H1 (cell line): ENCODE measurements at regions of chr2 and their contacts with region 1.

Region 1: DNA sequence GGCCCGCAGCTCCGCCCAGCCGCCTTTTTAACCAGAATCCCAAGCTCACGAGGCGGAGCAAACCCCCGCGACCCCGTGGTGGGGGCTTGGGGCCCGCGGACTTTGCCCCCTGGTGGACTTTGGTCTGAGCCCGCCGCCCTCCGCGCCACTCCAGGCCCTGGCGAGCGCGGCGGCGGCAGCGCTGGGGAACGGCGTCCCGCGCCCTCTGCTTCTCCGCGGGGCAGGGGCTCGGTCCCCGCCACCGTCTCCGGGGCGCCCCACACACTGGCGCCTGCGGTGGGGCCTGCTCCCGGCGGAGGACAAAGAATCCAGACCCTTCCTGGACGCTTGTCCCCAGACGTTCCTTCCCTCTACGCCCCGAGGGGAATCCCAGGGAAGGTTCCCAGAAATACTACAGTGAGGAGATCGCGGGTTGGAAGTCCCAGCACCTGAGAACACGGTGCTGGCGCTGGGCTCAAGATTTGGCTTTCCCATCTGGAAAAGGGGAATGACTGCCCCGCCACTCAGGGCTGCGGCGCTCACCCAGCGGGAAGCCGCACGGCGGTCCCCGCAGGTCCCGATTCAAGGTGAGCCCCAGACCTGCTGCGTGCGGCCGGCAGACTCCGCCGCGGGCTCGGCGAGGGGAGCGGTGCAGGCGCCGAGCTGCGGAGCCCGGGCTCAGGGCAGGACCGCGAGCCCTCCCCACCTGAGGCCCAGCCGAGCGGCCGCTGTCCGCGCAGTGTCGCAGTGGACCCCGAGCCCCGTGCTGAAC is at the start of gene HAAO:
- DNase-seq: peak in 1 of 2 experiments; percentile 77
- H3K4me3 ChIP-seq: peak within 1 kb of the TSS; percentile 61 to 75 (median 69)
- H3K27ac ChIP-seq: no peak within 1 kb of the TSS
- H3K4me1 ChIP-seq: peaks cover 2 to 10% (median 5%) of the 10 kb centered on the region in 4 experiments; a peak in 6 of 7 replicates
- H3K27me3 ChIP-seq: peaks cover 0 to 18% (median 14%) of the 10 kb centered on the region in 4 experiments; a peak in 6 of 7 replicates
- CTCF ChIP-seq: peak; percentile 1 to 17 (median 6); a peak in 3 of 4 replicates
- EP300 ChIP-seq: no peak
- POLR2A ChIP-seq: no peak; a peak in 1 of 3 replicates
- RAD21 ChIP-seq: no peak; a peak in 1 of 4 replicates
- total RNA-seq, gene HAAO: 2.5 and 3.2 TPM in 2 replicates

Region 2: DNA sequence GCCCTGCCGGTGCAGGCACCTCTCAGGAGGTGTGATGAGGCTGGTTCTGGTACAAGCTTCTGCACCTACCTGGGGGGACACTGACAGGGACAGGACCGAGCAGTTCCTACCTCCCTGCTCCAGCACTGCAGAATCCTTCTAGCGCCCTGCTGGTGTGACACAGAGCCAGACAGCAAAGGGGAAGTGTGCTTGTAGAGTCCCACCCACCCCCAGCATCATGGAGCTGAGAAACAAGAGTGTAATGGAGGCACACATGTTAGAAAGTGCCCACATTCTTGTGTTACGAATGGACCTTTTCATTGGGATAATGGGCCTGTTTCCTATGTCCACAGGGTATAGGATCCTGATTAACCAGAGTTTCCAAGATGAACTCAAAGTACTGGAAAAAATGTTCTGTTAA is 67.1 kb before region 1 on chr2:
- CTCF ChIA-PET with region 1: no interaction called
- POLR2A ChIA-PET with region 1: no interaction called
- DNase-seq: no peak
- H3K4me3 ChIP-seq: no peak overlapping the region
- H3K27ac ChIP-seq: no peak overlapping the region
- H3K4me1 ChIP-seq: peaks cover 0 to 10% (median 0%) of the 10 kb centered on the region in 4 experiments; a peak in 2 of 7 replicates
- H3K27me3 ChIP-seq: no peaks in the 10 kb centered on the region
- CTCF ChIP-seq: no peak
- EP300 ChIP-seq: no peak
- POLR2A ChIP-seq: no peak
- RAD21 ChIP-seq: no peak

Region 3: GRCh38 chr2:42810121-42810970 is 17.6 kb after region 1 on chr2:
- CTCF ChIA-PET with region 1: interaction called, 10 read pairs
- POLR2A ChIA-PET with region 1: interaction called, 61 read pairs
- DNase-seq: peak; percentile 87 to 96
- H3K4me3 ChIP-seq: peak overlapping the region; percentile 55 to 80 (median 66)
- H3K27ac ChIP-seq: peak overlapping the region; percentile 85
- H3K4me1 ChIP-seq: peaks cover 0 to 3% (median 0%) of the 10 kb centered on the region in 4 experiments; a peak in 4 of 7 replicates
- H3K27me3 ChIP-seq: no peaks in the 10 kb centered on the region
- CTCF ChIP-seq: no peak
- EP300 ChIP-seq: no peak
- POLR2A ChIP-seq: peak; percentile 83
- RAD21 ChIP-seq: no peak

Region 4: DNA sequence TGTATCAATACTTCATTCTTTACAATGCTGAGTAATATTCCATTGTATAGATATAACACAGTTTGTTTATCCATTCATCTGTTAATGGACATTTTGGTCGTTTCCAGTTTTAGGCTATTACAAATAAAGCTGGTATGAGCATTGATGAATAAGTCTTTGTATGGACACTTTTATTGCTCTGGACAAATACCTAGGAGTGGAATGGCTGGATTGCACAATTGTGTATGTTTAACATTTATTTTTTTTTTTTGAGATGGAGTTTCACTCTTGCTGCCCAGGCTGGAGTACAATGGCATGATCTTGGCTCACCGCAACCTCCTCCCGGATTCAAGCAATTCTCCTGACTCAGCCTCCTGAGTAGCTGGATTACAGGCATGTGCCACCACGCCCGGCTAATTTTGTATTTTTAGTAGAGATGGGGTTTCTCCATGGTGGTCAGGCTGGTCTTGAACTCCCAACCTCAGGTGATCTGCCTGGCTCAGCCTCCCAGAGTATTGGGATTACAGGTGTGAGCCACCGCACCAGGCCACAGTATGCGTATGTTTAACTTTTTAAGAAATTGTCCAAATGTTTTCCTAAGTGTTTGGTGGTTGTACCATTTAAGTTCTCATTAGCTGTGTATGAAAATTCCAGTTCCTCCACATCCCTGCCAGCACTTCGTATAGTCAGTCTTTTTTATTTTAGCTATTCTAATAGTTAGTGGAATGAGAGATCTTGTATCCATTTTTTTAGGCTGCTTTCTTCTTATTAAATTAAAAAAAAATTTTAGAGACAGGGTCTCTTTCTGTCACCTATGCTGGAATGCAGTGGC is 194.6 kb after region 1 on chr2:
- CTCF ChIA-PET with region 1: no interaction called
- POLR2A ChIA-PET with region 1: no interaction called
- DNase-seq: no peak
- H3K4me3 ChIP-seq: no peak overlapping the region
- H3K27ac ChIP-seq: no peak overlapping the region
- H3K4me1 ChIP-seq: no peaks in the 10 kb centered on the region
- H3K27me3 ChIP-seq: no peaks in the 10 kb centered on the region
- CTCF ChIP-seq: no peak
- EP300 ChIP-seq: no peak
- POLR2A ChIP-seq: no peak
- RAD21 ChIP-seq: no peak